ENCODE measurements at regions of chr17 and their contacts with region 1.

Region 1: DNA sequence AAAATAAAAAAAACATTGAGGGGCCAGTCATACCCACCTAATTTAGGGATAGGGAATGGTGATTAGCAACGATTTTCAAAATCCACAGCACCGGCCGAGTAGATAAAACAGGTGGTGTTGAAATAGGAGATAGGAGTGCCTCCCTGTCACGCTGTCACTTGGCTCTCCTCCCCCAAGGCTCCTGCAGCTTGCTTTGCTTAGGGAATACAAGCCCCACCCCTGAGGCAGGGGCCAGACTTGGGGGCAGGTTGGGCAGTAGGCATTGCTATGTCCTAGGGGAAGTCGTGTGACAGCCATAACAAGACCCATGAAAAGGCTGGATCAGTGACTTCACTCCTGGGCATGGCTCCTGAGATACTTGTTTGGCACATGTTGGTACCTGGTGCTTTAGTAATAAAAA is 25.8 kb downstream of the POLR2A start:
- DNase-seq: no peak
- ATAC-seq: no peak
- H3K4me3 Mint-ChIP-seq: no peak overlapping the region
- H3K27ac Mint-ChIP-seq: no peak overlapping the region
- H3K4me1 Mint-ChIP-seq: no peaks in the 10 kb centered on the region
- H3K27me3 Mint-ChIP-seq: no peaks in the 10 kb centered on the region
- CTCF ChIP-seq: no peak

Region 2: DNA sequence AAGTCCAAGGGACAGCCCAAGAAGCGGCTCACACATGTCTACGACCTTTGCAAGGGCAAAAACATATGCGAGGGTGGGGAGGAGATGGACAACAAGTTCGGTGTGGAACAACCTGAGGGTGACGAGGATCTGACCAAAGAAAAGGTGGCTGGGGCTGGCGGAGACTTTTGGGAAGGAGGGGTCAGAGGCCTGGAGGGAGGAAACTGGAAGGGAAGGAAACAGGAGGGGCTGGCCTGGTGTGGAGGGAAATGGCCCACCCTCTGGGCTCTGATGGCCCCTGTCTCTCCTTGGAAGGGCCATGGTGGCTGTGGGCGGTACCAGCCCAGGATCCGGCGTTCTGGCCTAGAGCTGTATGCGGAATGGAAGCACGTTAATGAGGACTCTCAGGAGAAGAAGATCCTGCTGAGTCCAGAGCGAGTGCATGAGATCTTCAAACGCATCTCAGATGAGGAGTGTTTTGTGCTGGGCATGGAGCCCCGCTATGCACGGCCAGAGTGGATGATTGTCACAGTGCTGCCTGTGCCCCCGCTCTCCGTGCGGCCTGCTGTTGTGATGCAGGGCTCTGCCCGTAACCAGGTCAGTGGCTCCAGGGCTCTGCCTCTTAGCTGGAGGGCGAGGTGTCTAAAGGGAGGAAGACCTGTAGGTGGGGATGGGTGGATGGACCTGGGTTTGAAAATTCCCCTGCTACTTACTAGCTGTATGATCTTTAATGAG is 13.3 kb before region 1 on chr17:
- CTCF ChIA-PET with region 1: interaction called, 23 read pairs
- POLR2A ChIA-PET with region 1: interaction called, 20 read pairs
- intact Hi-C with region 1: no loop called
- DNase-seq: no peak
- ATAC-seq: no peak
- H3K4me3 Mint-ChIP-seq: no peak overlapping the region
- H3K27ac Mint-ChIP-seq: no peak overlapping the region
- H3K4me1 Mint-ChIP-seq: peaks cover 19% of the 10 kb centered on the region
- H3K27me3 Mint-ChIP-seq: no peaks in the 10 kb centered on the region
- CTCF ChIP-seq: no peak

Region 3: DNA sequence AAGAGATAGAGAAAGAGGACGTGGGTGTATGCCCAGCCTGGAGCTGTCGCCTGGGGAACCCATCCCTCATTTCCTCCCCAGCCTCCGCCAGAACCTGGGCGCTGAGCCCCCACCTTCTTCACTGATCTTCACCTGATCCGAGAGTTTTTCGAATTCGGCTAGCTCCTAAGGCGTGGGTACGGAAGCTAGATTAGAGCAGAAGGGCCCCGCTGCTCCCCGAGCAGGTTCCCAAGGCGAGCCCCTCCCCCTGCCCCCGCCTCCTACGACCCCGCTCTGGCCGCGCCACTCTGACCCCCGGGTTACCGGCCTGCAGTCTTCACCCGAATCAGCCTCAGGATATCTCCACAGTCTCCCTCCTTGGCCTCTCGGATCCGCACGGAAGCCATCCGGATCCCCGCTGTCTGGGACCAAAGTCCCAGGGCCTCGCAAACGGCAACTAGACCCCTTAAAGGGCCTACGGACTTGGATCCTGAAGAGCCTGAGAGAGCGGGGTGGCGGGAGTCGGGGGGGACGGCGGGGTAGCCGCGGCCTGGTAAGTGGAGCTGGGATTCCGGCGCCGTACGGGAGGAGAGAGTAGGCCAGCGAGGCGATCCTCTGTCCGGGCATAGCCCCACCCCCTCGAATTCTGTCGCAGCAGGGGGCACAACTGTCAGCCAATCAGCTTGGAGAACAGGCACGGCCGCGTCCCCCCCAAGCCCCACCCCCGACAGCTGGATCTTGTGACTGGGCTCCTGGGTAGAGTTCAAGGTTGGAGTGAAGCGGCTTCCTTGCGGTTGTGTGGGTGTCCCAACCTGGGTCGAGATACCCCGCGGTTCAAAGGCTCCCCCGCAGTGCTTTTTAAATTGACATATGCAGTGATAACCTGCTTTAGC is 117.5 kb after region 1 on chr17 and contains the start of gene SAT2:
- CTCF ChIA-PET with region 1: no interaction called
- POLR2A ChIA-PET with region 1: no interaction called
- intact Hi-C with region 1: no loop called
- DNase-seq: peak; percentile 93
- ATAC-seq: peak; percentile 96
- H3K4me3 Mint-ChIP-seq: peak within 1 kb of the TSS; percentile 87
- H3K27ac Mint-ChIP-seq: peak within 1 kb of the TSS; percentile 76
- H3K4me1 Mint-ChIP-seq: peaks cover 10% of the 10 kb centered on the region
- H3K27me3 Mint-ChIP-seq: no peaks in the 10 kb centered on the region
- CTCF ChIP-seq: no peak
- total RNA-seq, gene SAT2: 15.6 to 22.2 TPM

Measured in activated CD8-positive, alpha-beta T cell treated with anti-CD3 and anti-CD28 coated beads for 36 hours (primary cell).